Mammary epithelial cell (primary cell): ENCODE measurements at regions of chr1 and their contacts with region 1.

Region 1: GRCh38 chr1:87953732-87954344 is 625.2 kb downstream of the LMO4 start:
- DNase-seq: peak; percentile 58
- H3K4me3 ChIP-seq: no peak overlapping the region
- H3K27ac ChIP-seq: no peak overlapping the region
- H3K4me1 ChIP-seq: peaks cover 8% of the 10 kb centered on the region
- H3K27me3 ChIP-seq: no peaks in the 10 kb centered on the region
- CTCF ChIP-seq: peak; percentile 67 to 80

Region 2: DNA sequence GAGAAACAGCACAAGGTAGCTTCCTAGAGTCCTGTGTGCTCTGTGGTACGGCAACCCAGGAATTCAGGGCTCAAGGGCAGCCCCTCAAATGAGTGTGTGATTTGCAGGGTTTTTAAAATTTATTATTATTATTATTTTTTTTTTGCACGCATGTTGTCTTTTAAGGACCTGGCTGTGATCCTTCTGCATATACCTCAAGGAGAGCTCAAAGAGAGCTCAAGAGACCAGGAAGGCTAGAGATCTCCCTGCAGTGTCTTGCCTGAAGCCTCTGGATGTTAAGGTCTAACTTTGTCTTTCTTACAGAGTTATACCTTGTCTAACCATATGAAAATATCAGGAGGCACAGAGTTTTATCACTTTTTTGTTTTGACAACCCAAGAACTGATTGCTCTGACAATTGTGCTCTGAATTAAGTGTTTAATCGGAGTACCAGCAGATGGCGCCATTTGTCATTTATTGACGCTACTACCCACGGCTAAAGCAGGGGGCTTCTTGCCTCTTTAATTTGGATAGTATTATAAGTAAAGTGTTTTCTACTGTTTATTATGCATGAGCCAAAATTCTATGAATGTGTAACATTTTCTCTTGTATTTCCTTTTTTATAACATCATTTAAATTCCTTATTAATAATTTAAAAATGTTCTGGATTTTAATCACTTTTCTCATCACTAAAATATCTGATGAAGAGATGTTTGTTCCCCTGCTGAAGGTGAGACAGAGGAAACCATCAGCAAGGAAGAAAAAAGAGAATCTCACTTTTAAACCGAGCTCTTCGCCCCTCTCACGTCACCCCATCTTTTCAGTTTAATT is 660.9 kb before region 1 on chr1:
- CTCF ChIA-PET with region 1: no interaction called
- dilution Hi-C with region 1: no loop called
- in situ Hi-C with region 1: no loop called
- intact Hi-C with region 1: loop called (anchors 1 kb)
- DNase-seq: peak; percentile 21
- H3K4me3 ChIP-seq: no peak overlapping the region
- H3K27ac ChIP-seq: no peak overlapping the region
- H3K4me1 ChIP-seq: no peaks in the 10 kb centered on the region
- H3K27me3 ChIP-seq: peaks cover 2% of the 10 kb centered on the region
- CTCF ChIP-seq: peak; percentile 69 to 73

Region 3: DNA sequence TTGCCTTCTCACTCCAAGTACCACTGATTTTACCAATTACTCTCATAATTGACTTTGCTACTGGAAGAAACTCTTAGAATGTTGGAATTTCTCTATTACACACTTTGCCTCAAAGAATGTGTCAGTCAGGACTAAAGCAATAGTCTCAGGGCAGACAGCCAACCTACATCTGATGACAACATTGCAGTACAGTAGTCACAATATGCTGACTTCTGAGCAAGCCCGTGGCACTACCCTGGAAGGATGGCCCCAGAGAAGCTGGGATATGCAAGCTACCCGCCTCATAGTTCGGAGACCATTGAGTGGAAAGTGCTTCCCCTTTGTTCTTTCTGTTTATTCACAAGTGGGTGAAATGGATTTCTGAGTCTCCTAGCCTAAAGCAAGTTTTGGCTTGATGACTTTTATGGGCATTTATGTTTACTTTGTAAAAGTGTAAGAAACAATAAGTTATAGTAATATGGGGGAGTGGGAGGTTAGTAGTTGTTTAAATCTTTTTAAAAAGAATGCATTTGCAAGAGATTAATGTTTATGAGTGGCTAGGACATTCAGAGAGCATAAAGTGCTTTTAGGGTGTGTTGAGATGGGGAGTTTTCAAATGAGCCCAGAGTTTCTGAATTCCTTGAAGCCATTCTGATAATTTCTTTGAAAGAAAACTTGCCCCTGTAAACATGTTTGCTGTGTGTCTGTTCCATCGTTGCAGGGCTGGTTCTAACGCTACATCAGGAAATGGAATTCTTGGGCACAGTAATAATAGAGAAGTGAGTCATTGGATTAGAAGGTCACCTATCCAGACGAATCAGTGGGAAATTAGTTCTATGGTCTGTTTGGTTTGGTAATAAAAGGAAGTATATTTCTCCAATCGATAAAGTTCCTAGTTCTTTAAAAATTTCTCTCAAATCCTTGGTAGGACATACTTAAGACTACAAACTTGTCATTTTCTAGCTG is 561.3 kb before region 1 on chr1:
- CTCF ChIA-PET with region 1: no interaction called
- dilution Hi-C with region 1: no loop called
- in situ Hi-C with region 1: no loop called
- intact Hi-C with region 1: no loop called
- DNase-seq: peak; percentile 53
- H3K4me3 ChIP-seq: no peak overlapping the region
- H3K27ac ChIP-seq: no peak overlapping the region
- H3K4me1 ChIP-seq: peaks cover 13% of the 10 kb centered on the region
- H3K27me3 ChIP-seq: no peaks in the 10 kb centered on the region
- CTCF ChIP-seq: no peak

Region 4: DNA sequence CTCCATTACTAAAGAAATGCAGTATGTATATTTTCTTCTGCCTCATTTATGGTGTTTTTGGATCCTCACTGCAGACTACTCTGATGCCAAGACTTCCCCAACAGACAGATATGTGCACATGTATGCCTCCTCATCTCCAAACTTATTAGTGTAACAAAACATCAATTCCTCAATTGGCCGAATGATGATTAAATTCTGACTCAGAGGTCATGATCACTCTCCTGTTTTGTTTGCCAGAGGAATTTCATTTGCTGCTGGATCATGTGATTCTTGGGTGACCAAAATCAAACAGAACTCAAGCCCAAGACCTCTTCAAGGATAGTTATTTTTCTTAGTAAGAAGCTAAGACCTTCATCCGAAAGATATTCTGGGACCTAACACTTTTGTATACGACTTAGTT is 397.5 kb before region 1 on chr1:
- CTCF ChIA-PET with region 1: no interaction called
- dilution Hi-C with region 1: no loop called
- in situ Hi-C with region 1: no loop called
- intact Hi-C with region 1: loop called (anchors 10 kb)
- DNase-seq: no peak
- H3K4me3 ChIP-seq: no peak overlapping the region
- H3K27ac ChIP-seq: no peak overlapping the region
- H3K4me1 ChIP-seq: no peaks in the 10 kb centered on the region
- H3K27me3 ChIP-seq: no peaks in the 10 kb centered on the region
- CTCF ChIP-seq: no peak

Region 5: DNA sequence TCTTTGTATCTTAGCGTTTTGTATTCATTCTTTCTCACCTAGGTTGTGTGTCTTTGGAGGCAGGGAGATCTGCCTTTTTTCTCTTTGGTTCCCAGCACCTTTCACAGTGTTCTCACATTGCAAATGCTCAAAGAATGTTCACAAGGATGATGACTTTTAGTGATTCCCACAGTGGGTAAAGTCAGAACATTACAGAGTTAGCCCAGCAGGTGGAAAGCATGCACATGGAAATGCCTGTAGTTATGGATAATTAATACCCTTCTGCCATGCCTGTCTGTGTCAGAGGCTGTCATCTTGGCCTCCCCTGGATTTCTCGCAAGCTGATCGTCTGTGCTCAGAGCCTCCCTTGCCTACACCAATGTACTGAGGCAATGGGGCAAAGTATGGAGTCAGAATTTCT is 166.3 kb before region 1 on chr1:
- CTCF ChIA-PET with region 1: no interaction called
- dilution Hi-C with region 1: no loop called
- in situ Hi-C with region 1: no loop called
- intact Hi-C with region 1: loop called (anchors 2 kb)
- DNase-seq: peak; percentile 18
- H3K4me3 ChIP-seq: no peak overlapping the region
- H3K27ac ChIP-seq: no peak overlapping the region
- H3K4me1 ChIP-seq: no peaks in the 10 kb centered on the region
- H3K27me3 ChIP-seq: no peaks in the 10 kb centered on the region
- CTCF ChIP-seq: peak in 1 of 2 donors; percentile 21

Region 6: DNA sequence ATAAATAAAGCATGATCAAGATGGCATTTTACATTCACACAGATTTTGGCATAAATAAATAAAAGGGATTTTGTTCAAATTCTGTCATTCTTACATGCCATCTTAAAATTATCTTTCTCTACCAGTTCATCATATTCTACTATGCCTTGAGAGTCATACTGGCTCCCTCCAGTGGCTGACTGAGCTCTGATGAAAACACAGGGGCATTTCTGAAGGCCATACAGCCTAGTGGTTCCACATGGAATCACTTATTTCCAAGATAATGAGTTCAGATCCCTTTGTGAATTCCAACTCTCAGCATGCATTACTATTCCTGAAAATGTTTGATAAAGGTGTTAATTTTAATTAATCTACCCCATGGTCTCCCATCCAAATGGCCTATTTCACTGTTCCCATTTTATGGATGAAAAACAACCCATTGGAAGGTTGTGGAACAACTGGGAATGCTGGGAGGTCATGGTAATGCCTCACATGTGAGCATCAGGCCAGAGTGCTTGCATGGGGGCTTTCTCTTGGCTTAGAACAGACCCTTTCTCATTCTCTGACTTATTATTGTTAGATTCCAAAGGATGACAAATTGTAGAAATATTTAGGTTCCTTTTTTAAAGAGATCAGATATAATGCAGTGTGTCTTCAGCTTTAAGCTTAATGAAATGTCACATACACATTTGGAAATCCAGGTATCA is 107.8 kb after region 1 on chr1:
- CTCF ChIA-PET with region 1: interaction called, 27 read pairs
- dilution Hi-C with region 1: no loop called
- in situ Hi-C with region 1: no loop called
- intact Hi-C with region 1: loop called (anchors 1 kb)
- DNase-seq: peak; percentile 75
- H3K4me3 ChIP-seq: no peak overlapping the region
- H3K27ac ChIP-seq: peak overlapping the region; percentile 19
- H3K4me1 ChIP-seq: peaks cover 24% of the 10 kb centered on the region
- H3K27me3 ChIP-seq: no peaks in the 10 kb centered on the region
- CTCF ChIP-seq: peak; percentile 92 to 94